ENCODE measurements at regions of chr14 and their contacts with region 1.

Region 1: DNA sequence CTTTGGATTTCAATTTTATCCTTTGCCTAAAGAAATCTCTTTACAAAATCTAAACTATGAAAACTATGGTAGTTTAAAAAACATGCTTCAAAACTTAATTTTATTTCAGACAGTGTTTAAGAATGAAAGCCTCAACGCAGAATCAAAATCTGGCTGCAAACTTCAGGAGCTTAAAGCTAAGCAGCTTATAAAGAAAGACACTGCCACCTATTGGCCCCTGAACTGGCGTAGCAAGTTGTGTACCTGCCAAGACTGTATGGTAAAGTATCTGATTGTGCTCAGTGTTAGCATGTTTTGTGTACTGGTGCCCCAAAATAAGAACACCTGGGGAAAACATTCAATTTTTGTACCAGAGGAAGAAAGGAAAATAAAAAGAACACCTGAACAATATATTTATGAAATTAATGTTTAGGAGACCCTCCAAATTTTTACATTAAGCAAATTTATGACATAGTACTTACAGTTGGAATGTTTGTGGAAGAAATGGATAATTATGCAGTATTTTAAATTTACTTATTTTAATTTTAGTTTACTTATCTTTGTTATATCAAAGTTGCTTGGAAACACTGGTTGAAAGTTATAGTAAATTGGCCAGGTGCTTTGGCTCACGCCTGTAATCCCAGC is 12.2 kb downstream of the UBR7 start:
- DNase-seq: peak in 1 of 2 experiments; percentile 65
- H3K4me3 ChIP-seq: no peak overlapping the region
- H3K27ac ChIP-seq: no peak overlapping the region
- H3K4me1 ChIP-seq: no peaks in the 10 kb centered on the region
- H3K27me3 ChIP-seq: no peaks in the 10 kb centered on the region
- CTCF ChIP-seq: peak; percentile 73

Region 2: DNA sequence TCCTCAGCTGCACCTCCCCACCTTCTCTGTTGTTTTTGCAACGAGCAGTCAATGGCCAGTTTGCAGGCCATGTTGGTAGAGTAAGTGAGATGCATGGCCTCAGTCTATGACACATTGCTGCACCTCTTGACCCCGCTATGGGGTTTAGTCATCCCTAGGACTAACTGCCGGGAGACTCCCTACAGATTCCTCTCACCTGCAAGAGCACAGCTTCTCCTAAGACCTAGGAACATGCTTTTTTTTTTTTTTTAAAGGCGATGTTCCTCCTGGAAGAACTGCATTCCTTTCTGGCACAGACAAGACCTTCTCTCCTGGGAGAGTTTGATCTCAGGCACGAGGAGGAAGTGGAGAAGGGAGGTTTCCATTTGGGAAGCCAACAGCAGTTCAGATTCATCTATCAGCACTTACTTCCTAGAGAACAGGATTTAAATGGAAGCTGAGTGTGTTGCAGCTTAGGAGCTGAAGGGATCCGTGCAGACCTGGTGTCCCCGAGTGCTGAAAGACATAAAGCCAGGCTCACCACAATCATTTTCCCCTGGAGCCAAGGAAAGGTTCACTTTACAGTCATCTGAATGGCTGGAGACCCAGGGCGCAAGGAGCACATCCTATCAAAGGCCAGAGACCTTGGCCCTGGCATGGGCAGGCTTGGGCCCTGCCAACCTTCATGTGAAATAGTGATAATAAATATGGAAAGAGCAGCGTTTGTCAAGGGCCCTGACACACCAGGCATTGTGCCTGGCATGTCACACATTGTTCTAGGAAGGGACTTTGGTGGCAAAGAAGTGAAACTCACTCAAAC is 574.8 kb before region 1 on chr14:
- CTCF ChIA-PET with region 1: no interaction called
- POLR2A ChIA-PET with region 1: interaction called, 16 read pairs
- intact Hi-C with region 1: no loop called
- DNase-seq: peak; percentile 66 to 99
- H3K4me3 ChIP-seq: no peak overlapping the region; the same call in 1 of the 2 replicates
- H3K27ac ChIP-seq: peak overlapping the region; percentile 99
- H3K4me1 ChIP-seq: peaks cover 60% of the 10 kb centered on the region
- H3K27me3 ChIP-seq: no peaks in the 10 kb centered on the region
- CTCF ChIP-seq: no peak

Region 3: DNA sequence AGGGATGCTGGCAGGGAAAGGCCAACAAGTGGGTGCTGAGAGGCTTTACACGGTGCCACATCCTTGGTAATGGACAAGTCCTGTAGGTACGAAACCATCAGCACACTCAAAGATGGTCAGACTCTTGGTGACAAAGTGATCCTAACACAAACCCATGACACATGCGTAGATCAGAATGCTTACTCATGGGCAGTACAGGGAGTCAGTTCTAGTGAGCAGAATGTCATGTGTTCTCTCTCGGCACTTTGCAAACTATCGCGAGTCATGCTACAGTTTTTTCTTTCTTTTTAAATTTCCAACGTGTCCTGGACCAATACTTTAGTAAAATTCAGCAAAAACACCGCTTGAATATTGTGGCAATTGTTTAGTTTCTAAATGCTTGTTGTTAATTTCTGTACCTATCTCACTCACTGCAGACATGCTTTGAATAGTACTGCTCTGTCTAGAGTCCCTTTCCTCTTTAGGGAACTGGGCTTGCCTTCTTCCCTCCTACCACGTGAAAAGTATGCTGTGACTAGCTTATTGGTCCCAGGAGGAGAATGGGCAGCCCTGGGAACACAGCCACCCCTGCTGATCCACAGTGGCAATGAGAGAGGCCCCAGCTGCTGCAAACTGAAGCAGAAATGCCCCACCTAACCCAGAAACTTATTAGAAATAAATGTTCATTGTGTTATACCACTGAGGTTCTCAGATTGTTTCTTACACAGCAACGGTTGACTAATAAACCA is 50.3 kb after region 1 on chr14:
- CTCF ChIA-PET with region 1: no interaction called
- POLR2A ChIA-PET with region 1: no interaction called
- intact Hi-C with region 1: no loop called
- DNase-seq: no peak
- H3K4me3 ChIP-seq: no peak overlapping the region
- H3K27ac ChIP-seq: no peak overlapping the region
- H3K4me1 ChIP-seq: no peaks in the 10 kb centered on the region
- H3K27me3 ChIP-seq: no peaks in the 10 kb centered on the region
- CTCF ChIP-seq: no peak